Heart left ventricle (tissue), 16 donors: ENCODE measurements at regions of chr6 and their contacts with region 1.

Region 1: GRCh38 chr6:3848925-3849605 is at the start of gene FAM50B:
- DNase-seq: peak; percentile 93 to 96 (median 94)
- ATAC-seq: peak; percentile 95 to 98 (median 98)
- H3K4me3 ChIP-seq: peak within 1 kb of the TSS; percentile 19 to 69 (median 53)
- H3K27ac ChIP-seq: peak within 1 kb of the TSS in 11 of 12 donors; percentile 53 to 83 (median 72)
- H3K4me1 ChIP-seq: peaks cover 0 to 20% (median 2%) of the 10 kb centered on the region in 12 donors
- H3K27me3 ChIP-seq: no peaks in the 10 kb centered on the region
- CTCF ChIP-seq: peak; percentile 91 to 99 (median 94)
- POLR2A ChIP-seq: no peak
- total RNA-seq, gene FAM50B: 13.6 to 29.1 (median 21.5) TPM

Region 2: DNA sequence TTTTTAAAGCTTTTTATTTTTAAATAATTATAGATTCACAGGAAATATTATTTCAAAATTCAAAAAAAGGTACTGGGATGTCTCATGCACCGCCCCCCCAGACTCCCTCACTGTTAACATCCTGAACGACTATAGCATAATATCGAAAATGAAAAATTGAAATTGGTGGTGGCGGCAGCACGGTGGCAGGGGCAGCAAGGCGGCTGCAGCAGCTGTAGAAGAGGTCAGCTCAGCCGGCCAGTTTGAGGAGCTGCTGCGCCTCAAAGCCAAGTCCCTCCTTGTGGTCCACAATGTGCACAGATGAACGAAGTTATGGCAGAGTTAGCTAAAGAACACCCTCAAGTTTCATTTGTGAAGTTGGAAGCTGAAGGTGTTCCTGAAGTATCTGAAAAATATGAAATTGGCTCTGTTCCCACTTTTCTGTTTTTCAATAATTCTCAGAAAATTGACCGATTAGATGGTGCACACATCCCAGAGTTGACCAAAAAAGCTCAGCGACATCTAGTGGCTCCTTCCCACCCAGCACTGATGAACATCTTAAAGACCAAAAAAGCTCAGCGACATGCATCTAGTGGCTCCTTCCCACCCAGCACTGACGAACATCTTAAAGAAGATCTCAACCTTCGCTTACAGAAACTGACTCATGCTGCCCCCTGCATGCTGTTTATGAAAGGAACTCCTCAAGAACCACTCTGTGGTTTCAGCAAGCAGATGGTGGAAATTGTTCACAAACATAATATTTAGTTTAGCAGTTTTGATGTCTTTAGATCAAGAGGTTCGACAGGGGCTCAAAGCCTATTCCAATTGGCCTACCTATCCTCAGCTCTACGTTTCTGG is 129.0 kb after region 1 on chr6:
- intact Hi-C with region 1: loop called in 1 of 10 experiments (anchors 10 kb)
- DNase-seq: peak in 3 of 5 donors; percentile 15 to 40 (median 32)
- ATAC-seq: peak in 3 of 4 donors; percentile 86 to 92 (median 87)
- H3K4me3 ChIP-seq: peak overlapping the region in 1 of 12 donors; percentile 4
- H3K27ac ChIP-seq: no peak overlapping the region
- H3K4me1 ChIP-seq: peaks cover 0 to 8% (median 0%) of the 10 kb centered on the region in 12 donors
- H3K27me3 ChIP-seq: no peaks in the 10 kb centered on the region
- CTCF ChIP-seq: peak; percentile 41 to 74 (median 60)
- POLR2A ChIP-seq: no peak

Region 3: DNA sequence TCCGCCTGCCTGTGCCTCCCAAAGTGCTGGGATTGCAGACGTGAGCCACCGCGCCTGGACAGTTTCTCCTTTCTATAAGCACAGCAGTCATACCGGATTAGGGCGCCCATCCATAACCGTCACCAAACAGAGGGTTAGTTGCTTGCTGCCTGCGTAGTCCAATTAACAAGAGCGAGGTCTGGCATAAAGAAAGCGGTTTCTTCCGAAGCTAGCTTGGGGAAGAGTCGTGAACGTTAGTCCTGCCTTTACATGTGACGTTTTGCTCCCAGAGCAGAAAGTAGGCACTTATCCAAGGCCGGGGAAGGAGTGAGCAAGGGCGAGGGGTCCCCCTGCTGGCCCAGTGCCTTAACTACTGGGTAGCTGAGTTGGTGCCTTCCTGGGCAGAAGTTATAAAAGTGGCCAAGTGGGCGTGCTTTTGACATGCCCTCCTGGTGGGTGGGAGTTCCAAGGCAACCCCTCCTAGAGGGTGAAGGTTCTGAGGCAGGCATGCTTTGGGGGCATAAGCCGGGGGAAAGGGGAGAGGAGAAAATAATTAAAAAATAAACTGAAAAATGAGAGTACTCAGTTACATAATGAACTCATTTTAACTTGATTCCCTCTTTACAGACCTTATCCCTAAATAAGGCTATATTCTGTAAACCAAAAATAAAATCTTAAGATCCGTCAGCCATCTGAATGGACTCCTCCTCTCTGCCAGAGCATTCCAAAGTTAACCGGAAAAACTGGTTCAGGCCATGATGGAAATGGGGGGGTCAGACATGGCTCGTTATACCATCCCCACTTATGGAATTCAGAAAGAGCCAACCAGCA is 141.8 kb after region 1 on chr6:
- intact Hi-C with region 1: loop called in 2 of 10 experiments (anchors 5 kb)
- DNase-seq: peak; percentile 88 to 92 (median 89)
- ATAC-seq: peak; percentile 77 to 95 (median 94)
- H3K4me3 ChIP-seq: peak overlapping the region in 11 of 12 donors; percentile 17 to 69 (median 52)
- H3K27ac ChIP-seq: peak overlapping the region in 9 of 12 donors; percentile 5 to 82 (median 63)
- H3K4me1 ChIP-seq: peaks cover 0 to 20% (median 3%) of the 10 kb centered on the region in 12 donors
- H3K27me3 ChIP-seq: no peaks in the 10 kb centered on the region
- CTCF ChIP-seq: peak; percentile 70 to 92 (median 88)
- POLR2A ChIP-seq: no peak

Region 4: GRCh38 chr6:4125936-4126864 is 277.1 kb after region 1 on chr6:
- intact Hi-C with region 1: no loop called
- DNase-seq: no peak
- ATAC-seq: peak in 3 of 4 donors; percentile 44 to 91 (median 77)
- H3K4me3 ChIP-seq: no peak overlapping the region
- H3K27ac ChIP-seq: peak overlapping the region in 2 of 12 donors; percentile 30 to 34
- H3K4me1 ChIP-seq: peaks cover 0 to 7% (median 0%) of the 10 kb centered on the region in 12 donors
- H3K27me3 ChIP-seq: no peaks in the 10 kb centered on the region
- CTCF ChIP-seq: peak in 3 of 12 donors; percentile 5 to 27 (median 20)
- POLR2A ChIP-seq: no peak